ENCODE measurements at regions of chr11 and their contacts with region 1.

Region 1: GRCh38 chr11:27296497-27296896 is 66.5 kb downstream of the CCDC34 start:
- DNase-seq: no peak
- ATAC-seq: peak; percentile 71 to 84
- H3K4me3 ChIP-seq: no peak overlapping the region
- H3K27ac ChIP-seq: no peak overlapping the region
- H3K4me1 ChIP-seq: no peaks in the 10 kb centered on the region
- H3K27me3 ChIP-seq: no peaks in the 10 kb centered on the region
- CTCF ChIP-seq: peak; percentile 39 to 69 (median 55)
- POLR2A ChIP-seq: no peak

Region 2: GRCh38 chr11:26730414-26731080 is 566.0 kb before region 1 on chr11:
- in situ Hi-C with region 1: loop called in 1 of 4 experiments (anchors 25 kb)
- intact Hi-C with region 1: no loop called
- DNase-seq: no peak
- ATAC-seq: peak; percentile 99 to 100
- H3K4me3 ChIP-seq: no peak overlapping the region
- H3K27ac ChIP-seq: no peak overlapping the region
- H3K4me1 ChIP-seq: peaks cover 6 to 7% of the 10 kb centered on the region in 2 donors
- H3K27me3 ChIP-seq: no peaks in the 10 kb centered on the region
- CTCF ChIP-seq: no peak
- POLR2A ChIP-seq: no peak

Region 3: DNA sequence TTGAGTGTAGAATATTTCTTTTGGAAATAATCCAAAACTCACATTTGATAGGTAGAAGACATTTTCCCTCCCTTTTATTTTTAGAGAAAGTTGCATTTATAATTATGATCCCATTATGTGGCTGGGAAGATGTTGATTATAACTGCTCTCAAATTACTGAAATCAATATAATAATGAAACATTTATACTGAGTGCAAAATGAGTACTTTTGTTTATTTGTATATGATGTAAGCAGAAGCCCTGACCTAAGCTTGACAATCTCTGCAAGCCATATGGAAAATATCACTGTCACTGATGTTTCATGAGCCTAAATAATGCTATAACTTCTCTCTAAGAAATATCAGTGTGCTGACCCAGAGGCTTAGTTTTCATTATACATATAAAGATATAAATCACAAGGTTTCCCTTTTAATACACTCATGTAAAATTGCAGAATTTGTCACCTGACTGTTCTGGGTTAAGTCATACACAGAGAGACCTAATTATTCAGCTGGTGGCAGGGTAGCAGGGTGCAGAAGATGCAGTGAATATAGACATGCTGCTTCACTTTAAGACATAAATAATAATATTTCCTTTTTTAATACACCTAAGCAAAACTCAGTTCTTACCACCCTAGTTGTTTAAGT is 156.6 kb before region 1 on chr11:
- in situ Hi-C with region 1: no loop called
- intact Hi-C with region 1: no loop called
- DNase-seq: no peak
- ATAC-seq: no peak
- H3K4me3 ChIP-seq: no peak overlapping the region
- H3K27ac ChIP-seq: no peak overlapping the region
- H3K4me1 ChIP-seq: no peaks in the 10 kb centered on the region
- H3K27me3 ChIP-seq: no peaks in the 10 kb centered on the region
- CTCF ChIP-seq: no peak
- POLR2A ChIP-seq: no peak

Region 4: DNA sequence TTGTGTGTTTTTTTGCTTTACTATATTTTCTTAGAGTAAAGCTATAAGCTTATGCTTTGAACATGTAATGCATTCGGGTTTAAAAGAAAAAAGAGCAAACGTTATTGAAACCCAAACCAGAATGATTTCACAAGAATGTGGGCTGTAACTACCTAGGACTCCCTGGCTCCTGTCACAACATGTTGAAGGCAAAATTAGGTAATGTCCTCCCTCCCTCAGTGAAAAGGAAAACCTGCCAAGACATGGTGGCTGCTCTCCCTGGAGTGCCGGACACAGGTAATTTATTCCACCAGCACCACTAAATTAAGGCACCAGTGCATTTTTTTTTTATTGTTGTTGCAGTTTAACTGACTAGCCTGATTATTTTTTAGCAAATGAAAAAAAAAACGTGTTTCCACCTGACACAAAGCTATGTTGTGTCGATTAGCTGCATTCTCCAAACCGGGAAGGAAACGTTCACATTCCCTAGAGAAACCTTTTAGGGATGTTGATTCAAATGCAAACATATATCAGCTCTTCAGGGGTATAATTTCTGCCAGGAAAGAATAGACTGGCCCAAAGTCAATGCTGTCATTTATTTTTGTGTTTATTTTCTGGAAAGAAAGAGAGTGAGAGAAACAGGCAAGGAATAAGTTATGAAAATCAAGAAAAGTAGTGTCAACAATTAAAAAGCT is 68.1 kb before region 1 on chr11:
- in situ Hi-C with region 1: no loop called
- intact Hi-C with region 1: no loop called
- DNase-seq: no peak
- ATAC-seq: peak; percentile 68 to 77
- H3K4me3 ChIP-seq: no peak overlapping the region
- H3K27ac ChIP-seq: no peak overlapping the region
- H3K4me1 ChIP-seq: peaks cover 11 to 15% of the 10 kb centered on the region in 2 donors
- H3K27me3 ChIP-seq: no peaks in the 10 kb centered on the region
- CTCF ChIP-seq: no peak
- POLR2A ChIP-seq: no peak

Region 5: DNA sequence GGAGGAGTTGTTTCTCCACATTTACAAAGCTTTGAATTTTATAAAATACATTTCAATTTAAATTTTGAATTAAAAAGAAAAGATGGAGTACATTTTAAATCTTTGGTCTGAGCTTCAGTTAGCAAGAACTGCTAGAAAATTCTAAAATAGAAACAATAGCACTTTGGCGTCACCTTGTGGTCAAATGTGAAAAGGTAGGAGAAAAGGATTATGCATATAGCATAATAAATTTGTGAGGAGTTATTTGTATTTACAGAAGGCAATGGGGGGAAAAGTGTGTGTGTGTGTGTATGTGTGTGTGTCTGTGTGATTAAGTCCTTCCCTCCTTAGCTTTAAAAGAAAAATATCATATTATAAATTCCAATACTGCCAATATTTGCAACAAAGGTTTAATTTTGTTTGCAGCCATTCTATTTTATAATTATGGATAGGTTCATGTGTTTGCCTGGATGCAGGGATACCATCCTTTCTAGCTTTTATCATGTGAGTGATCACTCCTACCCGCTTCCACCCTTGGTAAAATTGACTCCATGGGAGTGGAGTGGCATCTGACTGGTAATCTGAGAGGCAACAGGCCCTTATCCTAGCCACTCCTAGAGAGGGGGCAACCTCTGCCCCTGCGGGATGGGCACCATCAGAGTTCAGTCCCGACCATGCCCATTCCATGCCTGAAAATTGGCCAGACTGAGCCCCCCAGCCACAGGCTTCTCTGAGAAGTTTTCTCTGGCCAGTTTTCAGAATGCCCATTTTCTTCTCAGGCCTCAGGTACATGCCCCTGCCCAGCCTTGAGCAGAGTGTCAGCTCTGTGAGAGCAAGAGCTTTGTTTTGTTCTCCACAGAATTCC is 189.7 kb after region 1 on chr11:
- in situ Hi-C with region 1: no loop called
- intact Hi-C with region 1: loop called (anchors 5 kb)
- DNase-seq: no peak
- ATAC-seq: peak in 1 of 2 donors; percentile 47
- H3K4me3 ChIP-seq: no peak overlapping the region
- H3K27ac ChIP-seq: no peak overlapping the region
- H3K4me1 ChIP-seq: no peaks in the 10 kb centered on the region
- H3K27me3 ChIP-seq: no peaks in the 10 kb centered on the region
- CTCF ChIP-seq: peak; percentile 77 to 96 (median 89)
- POLR2A ChIP-seq: no peak

Measured in gastrocnemius medialis (tissue), 4 donors.